H1 (cell line): ENCODE measurements at regions of chr5 and their contacts with region 1.

Region 1: DNA sequence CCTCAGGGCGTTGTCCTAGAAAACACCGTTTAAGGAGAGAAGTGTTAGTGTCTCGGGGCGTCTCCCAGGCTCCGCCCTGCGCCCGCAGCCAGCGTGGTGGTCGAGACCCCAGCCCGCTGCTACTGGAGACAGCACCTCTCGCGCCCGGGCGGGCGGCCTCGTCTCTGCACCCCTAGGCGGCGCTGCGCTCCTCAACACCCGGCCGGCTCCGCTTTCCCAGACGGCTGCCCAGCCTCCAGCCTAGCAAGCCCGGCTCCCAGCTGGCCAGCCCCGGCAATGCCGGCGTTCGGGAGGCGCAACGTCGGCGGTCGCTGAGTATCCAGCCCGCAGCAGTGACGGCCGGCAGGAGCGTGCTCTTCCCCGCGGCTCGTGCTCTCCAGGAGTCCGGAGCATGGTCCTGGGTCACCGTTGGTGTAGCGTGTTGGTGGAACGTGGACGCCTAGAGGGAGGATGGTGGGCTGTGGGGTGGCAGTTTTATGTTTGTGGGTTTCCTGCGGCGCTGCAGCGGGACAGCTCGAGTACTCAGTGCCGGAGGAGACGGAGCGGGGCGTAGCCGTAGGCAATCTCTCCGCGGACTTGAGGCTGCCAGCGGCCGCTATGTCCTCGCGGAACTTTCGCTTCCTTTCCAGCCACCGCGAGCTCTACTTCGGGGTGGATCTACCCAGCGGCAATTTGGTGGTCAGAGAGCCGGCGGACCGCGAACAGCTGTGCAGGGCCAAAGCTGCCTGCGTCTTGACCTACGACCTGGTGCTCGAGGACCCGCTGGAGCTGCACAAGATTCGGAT is 536 bp downstream of the PCDHAC1 start:
- DNase-seq: peak; percentile 81 to 98
- H3K4me3 ChIP-seq: peak overlapping the region; percentile 62 to 75 (median 70)
- H3K27ac ChIP-seq: no peak overlapping the region
- H3K4me1 ChIP-seq: peaks cover 0 to 15% (median 11%) of the 10 kb centered on the region in 4 experiments; a peak in 6 of 7 replicates
- H3K27me3 ChIP-seq: peaks cover 0 to 25% (median 15%) of the 10 kb centered on the region in 4 experiments; a peak in 6 of 7 replicates
- CTCF ChIP-seq: peak; percentile 84 to 98 (median 92)
- EP300 ChIP-seq: no peak
- POLR2A ChIP-seq: no peak; a peak in 1 of 3 replicates
- RAD21 ChIP-seq: peak; percentile 80 to 89

Region 2: DNA sequence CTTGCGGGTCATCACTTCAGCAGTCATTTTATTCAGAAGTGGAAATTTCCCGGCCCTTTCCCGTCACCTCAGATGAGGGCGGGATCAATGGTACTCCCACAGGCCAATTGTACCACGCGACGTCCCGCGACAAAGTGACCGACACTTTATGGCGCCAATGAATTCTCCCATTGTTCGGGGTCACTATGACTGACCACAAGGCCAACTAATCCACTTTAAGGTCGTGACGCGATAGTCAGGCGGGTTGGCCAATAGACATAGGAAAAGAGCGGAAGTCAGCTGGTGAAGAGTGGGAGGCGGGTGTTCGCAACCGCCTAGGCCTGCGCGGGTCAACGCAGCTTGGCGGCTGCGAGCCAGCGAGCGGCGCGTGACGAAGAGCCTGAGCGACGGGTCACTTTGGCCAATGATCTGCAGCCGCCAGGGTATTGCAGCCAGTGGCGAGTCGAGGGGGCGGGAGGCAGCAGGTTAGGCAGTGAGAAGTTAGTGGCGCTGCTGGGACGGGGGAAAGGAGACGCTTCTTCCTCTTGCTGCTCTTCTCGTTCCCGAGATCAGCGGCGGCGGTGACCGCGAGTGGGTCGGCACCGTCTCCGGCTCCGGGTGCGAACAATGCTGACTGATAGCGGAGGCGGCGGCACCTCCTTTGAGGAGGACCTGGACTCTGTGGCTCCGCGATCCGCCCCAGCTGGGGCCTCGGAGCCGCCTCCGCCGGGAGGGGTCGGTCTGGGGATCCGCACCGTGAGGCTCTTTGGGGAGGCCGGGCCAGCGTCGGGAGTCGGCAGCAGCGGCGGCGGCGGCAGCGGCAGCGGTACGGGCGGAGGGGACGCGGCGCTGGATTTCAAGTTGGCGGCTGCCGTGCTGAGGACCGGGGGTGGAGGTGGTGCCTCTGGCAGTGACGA is 525.0 kb before region 1 on chr5 and contains the start of gene ANKHD1:
- CTCF ChIA-PET with region 1: no interaction called
- POLR2A ChIA-PET with region 1: no interaction called
- DNase-seq: peak; percentile 91 to 99
- H3K4me3 ChIP-seq: peak within 1 kb of the TSS; percentile 94 to 100 (median 97)
- H3K27ac ChIP-seq: peak within 1 kb of the TSS; percentile 92
- H3K4me1 ChIP-seq: peaks cover 0 to 9% (median 5%) of the 10 kb centered on the region in 4 experiments; a peak in 5 of 7 replicates
- H3K27me3 ChIP-seq: no peaks in the 10 kb centered on the region
- CTCF ChIP-seq: no peak
- EP300 ChIP-seq: no peak
- POLR2A ChIP-seq: peak; percentile 29 to 90
- RAD21 ChIP-seq: no peak
- total RNA-seq, gene ANKHD1: 101 and 108 TPM in 2 replicates

Region 3: GRCh38 chr5:140780512-140780911 is 146.1 kb before region 1 on chr5:
- CTCF ChIA-PET with region 1: no interaction called
- POLR2A ChIA-PET with region 1: no interaction called
- DNase-seq: no peak
- H3K4me3 ChIP-seq: no peak overlapping the region
- H3K27ac ChIP-seq: no peak overlapping the region
- H3K4me1 ChIP-seq: no peaks in the 10 kb centered on the region
- H3K27me3 ChIP-seq: no peaks in the 10 kb centered on the region
- CTCF ChIP-seq: no peak
- EP300 ChIP-seq: no peak
- POLR2A ChIP-seq: no peak
- RAD21 ChIP-seq: no peak

Region 4: DNA sequence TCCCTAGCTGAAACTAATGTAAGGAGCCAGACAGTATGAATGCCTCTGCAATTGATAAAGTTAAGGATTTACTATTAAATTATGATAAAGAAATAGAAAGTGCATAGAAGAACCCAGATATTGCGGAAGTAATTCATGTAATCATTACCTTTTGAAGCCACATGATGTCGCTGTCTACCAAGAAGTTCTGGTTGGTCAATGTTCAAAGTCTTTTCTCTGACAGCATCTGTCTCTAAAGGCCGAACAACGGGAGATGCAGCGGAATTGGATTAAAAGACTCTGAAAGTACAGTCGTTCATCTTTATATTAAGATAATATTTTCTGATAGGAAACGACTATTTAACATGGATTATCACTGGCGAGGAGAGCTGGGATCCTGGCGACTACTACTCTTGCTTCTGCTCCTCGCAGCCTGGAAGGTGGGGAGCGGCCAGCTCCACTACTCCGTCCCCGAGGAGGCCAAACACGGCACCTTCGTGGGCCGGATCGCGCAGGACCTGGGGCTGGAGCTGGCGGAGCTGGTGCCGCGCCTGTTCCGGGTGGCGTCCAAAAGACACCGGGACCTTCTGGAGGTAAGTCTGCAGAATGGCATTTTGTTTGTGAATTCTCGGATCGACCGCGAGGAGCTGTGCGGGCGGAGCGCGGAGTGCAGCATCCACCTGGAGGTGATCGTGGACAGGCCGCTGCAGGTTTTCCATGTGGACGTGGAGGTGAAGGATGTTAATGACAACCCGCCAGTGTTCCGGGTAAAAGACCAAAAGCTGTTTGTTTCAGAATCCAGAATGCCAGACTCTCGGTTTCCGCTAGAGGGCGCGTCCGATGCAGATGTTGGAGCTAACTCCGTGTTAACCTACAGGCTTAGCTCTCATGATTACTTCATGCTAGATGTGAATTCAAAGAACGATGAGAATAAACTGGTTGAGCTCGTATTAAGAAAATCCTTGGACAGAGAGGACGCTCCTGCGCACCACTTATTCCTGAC is 85.4 kb before region 1 on chr5 and contains the start of gene PCDHA8:
- CTCF ChIA-PET with region 1: interaction called, 15 read pairs
- POLR2A ChIA-PET with region 1: no interaction called
- DNase-seq: peak in 1 of 2 experiments; percentile 84
- H3K4me3 ChIP-seq: peak within 1 kb of the TSS in 3 of 4 experiments; percentile 29 to 47 (median 29); a peak in 4 of 8 replicates
- H3K27ac ChIP-seq: no peak within 1 kb of the TSS
- H3K4me1 ChIP-seq: no peaks in the 10 kb centered on the region
- H3K27me3 ChIP-seq: no peaks in the 10 kb centered on the region
- CTCF ChIP-seq: peak; percentile 63 to 81 (median 79)
- EP300 ChIP-seq: no peak
- POLR2A ChIP-seq: no peak
- RAD21 ChIP-seq: peak; percentile 70 to 76
- total RNA-seq, gene PCDHA8: 0.52 and 0.96 TPM in 2 replicates

Region 5: DNA sequence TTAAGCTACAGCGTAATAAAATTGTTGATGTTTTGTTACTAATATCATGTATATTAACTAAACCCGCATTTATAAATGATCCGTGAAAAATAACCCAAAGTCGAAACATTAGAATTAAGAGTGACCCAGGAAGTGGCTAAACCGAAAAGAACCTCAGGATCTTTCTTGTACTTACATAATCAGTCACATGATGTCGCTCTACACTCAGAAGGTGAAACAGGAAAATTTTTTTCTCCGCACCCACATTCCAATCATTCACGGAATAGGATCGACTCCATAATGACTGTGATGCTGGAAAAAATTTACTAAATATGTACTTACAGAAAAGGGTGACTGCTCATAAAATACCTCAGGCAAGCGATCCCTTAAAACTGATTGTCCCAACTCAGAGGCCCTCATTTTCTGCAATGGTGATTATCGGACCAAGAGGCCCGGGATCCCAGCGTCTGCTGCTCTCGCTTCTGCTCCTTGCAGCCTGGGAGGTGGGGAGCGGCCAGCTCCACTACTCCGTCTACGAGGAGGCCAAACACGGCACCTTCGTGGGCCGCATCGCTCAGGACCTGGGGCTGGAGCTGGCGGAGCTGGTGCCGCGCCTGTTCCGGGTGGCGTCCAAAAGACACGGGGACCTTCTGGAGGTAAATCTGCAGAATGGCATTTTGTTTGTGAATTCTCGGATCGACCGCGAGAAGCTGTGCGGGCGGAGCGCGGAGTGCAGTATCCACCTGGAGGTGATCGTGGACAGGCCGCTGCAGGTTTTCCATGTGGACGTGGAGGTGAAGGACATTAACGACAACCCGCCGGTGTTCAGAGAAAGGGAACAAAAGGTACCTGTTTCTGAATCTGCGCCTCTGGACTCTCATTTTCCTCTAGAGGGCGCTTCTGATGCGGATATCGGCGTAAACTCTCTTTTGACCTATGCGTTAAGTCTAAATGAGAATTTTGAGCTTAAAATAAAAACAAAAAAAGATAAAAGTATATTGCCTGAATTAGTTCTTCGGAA is 51.3 kb before region 1 on chr5 and contains the start of gene PCDHA12:
- CTCF ChIA-PET with region 1: interaction called, 37 read pairs
- POLR2A ChIA-PET with region 1: interaction called, 7 read pairs
- DNase-seq: no peak
- H3K4me3 ChIP-seq: peak within 1 kb of the TSS; percentile 55 to 67 (median 65)
- H3K27ac ChIP-seq: no peak within 1 kb of the TSS
- H3K4me1 ChIP-seq: no peaks in the 10 kb centered on the region; a peak in 2 of 7 replicates
- H3K27me3 ChIP-seq: no peaks in the 10 kb centered on the region
- CTCF ChIP-seq: peak in 2 of 3 experiments; percentile 64 to 69; a peak in 3 of 4 replicates
- EP300 ChIP-seq: no peak
- POLR2A ChIP-seq: peak in 1 of 2 experiments; percentile 68; a peak in 2 of 3 replicates
- RAD21 ChIP-seq: peak; percentile 69 to 73
- total RNA-seq, gene PCDHA12: 9.3 and 10.6 TPM in 2 replicates

Region 6: GRCh38 chr5:140966293-140967225 is 39.9 kb after region 1 on chr5 and contains the start of gene PCDHAC2:
- CTCF ChIA-PET with region 1: interaction called, 56 read pairs
- POLR2A ChIA-PET with region 1: interaction called, 9 read pairs
- DNase-seq: peak in 1 of 2 experiments; percentile 83
- H3K4me3 ChIP-seq: peak within 1 kb of the TSS; percentile 76 to 96 (median 92)
- H3K27ac ChIP-seq: no peak within 1 kb of the TSS
- H3K4me1 ChIP-seq: peaks cover 2 to 15% (median 7%) of the 10 kb centered on the region in 4 experiments; a peak in 5 of 7 replicates
- H3K27me3 ChIP-seq: peaks cover 2 to 27% (median 20%) of the 10 kb centered on the region in 4 experiments
- CTCF ChIP-seq: 0 out of 4 replicates have a peak, but pooled peaks of 1 of the 3 experiments have one; percentile 9
- EP300 ChIP-seq: peak in 1 of 2 experiments; percentile 44; a peak in 1 of 3 replicates
- POLR2A ChIP-seq: peak in 1 of 2 experiments; percentile 15; a peak in 1 of 3 replicates
- RAD21 ChIP-seq: 0 out of 4 replicates have a peak, but pooled peaks of 1 of the 2 experiments have one; percentile 3
- total RNA-seq, gene PCDHAC2: 3.7 and 4.9 TPM in 2 replicates

Region 7: GRCh38 chr5:140988031-140988997 is 61.7 kb after region 1 on chr5:
- CTCF ChIA-PET with region 1: interaction called, 46 read pairs
- POLR2A ChIA-PET with region 1: interaction called, 10 read pairs
- DNase-seq: no peak
- H3K4me3 ChIP-seq: peak overlapping the region in 1 of 4 experiments; percentile 2; a peak in 2 of 8 replicates
- H3K27ac ChIP-seq: no peak overlapping the region
- H3K4me1 ChIP-seq: peaks cover 6 to 28% (median 13%) of the 10 kb centered on the region in 4 experiments; a peak in 6 of 7 replicates
- H3K27me3 ChIP-seq: no peaks in the 10 kb centered on the region
- CTCF ChIP-seq: no peak
- EP300 ChIP-seq: no peak
- POLR2A ChIP-seq: no peak
- RAD21 ChIP-seq: no peak

Region 8: DNA sequence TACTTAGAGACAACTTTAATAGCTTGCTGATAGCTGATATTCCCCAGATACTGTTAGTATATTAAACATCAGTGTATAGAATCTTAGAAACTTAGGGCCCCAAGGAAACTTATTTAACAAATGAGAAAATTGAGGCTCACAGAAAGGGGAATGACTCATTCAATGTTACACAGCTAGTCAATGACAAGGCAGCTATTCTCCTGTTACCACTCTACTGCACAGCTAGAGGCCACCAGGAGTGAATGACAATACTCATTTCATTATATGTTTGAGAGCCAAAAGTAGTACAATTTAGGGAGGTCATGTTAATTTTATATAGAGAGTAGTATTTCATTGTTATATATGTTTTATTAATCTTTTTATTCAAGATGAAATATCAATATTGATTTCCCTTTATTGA is 91.3 kb after region 1 on chr5:
- CTCF ChIA-PET with region 1: interaction called, 10 read pairs
- POLR2A ChIA-PET with region 1: no interaction called
- DNase-seq: no peak
- H3K4me3 ChIP-seq: no peak overlapping the region
- H3K27ac ChIP-seq: no peak overlapping the region
- H3K4me1 ChIP-seq: no peaks in the 10 kb centered on the region
- H3K27me3 ChIP-seq: no peaks in the 10 kb centered on the region
- CTCF ChIP-seq: no peak
- EP300 ChIP-seq: no peak
- POLR2A ChIP-seq: no peak
- RAD21 ChIP-seq: no peak

Region 9: DNA sequence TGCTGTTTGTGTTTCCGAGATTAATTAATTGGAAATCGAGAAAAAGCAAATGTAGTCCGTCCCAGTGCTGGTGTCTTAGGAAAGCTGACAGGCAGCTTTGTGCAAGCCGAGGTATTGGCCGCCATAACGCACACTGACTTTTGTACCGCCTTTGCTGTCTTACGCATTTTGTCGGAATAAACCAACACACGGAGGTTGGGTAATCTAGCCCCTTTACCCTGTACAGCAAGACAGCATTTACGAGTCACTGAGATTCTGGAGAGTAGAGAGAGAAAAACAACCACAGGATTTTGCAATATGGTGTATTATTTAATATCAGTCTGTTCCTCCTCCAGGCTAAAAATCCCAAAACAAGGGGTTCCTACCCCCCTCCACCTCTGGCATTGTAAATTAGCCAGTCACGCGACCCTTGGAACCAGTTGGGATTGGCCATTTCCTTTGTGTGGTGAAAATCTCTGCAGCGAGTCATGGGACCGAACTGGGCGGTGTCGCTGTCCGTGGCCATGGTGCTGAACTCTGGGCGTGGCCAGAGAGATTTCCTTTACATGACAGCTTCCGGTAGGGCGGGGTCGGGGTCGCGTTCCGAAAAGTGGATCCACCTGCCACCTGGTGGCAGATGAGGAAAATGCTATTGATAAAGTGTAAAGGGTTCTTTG is 114.3 kb after region 1 on chr5:
- CTCF ChIA-PET with region 1: interaction called, 78 read pairs
- POLR2A ChIA-PET with region 1: interaction called, 41 read pairs
- DNase-seq: peak; percentile 98 to 99
- H3K4me3 ChIP-seq: peak overlapping the region; percentile 71 to 86 (median 74)
- H3K27ac ChIP-seq: peak overlapping the region; percentile 97
- H3K4me1 ChIP-seq: peaks cover 0 to 8% (median 6%) of the 10 kb centered on the region in 4 experiments; a peak in 3 of 7 replicates
- H3K27me3 ChIP-seq: 0 out of 7 replicates have a peak, but pooled peaks cover 0 to 1% (median 0%) of the 10 kb centered on the region in 4 experiments
- CTCF ChIP-seq: peak; percentile 56 to 93 (median 76)
- EP300 ChIP-seq: peak in 1 of 2 experiments; percentile 99; a peak in 2 of 3 replicates
- POLR2A ChIP-seq: peak; percentile 94 to 96
- RAD21 ChIP-seq: peak; percentile 94 to 97